HEK293 (cell line): ENCODE measurements at regions of chr22 and their contacts with region 1.

Region 1: GRCh38 chr22:39520054-39520891 is at the start of gene ATF4:
- H3K4me3 ChIP-seq: peak within 1 kb of the TSS; percentile 95
- H3K27ac ChIP-seq: peak within 1 kb of the TSS; percentile 95
- H3K4me1 ChIP-seq: 0 out of 2 replicates have a peak, but pooled peaks cover 5% of the 10 kb centered on the region
- CTCF ChIP-seq: 0 out of 2 replicates have a peak, but pooled peaks have one; percentile 11

Region 2: GRCh38 chr22:39395936-39396796 is 124.1 kb before region 1 on chr22:
- CTCF ChIA-PET with region 1: no interaction called
- POLR2A ChIA-PET with region 1: interaction called, 13 read pairs
- H3K4me3 ChIP-seq: no peak overlapping the region
- H3K27ac ChIP-seq: no peak overlapping the region
- H3K4me1 ChIP-seq: no peaks in the 10 kb centered on the region
- CTCF ChIP-seq: no peak

Region 3: GRCh38 chr22:39490135-39490798 is 30.0 kb before region 1 on chr22:
- CTCF ChIA-PET with region 1: interaction called, 380 read pairs
- POLR2A ChIA-PET with region 1: interaction called, 23 read pairs
- H3K4me3 ChIP-seq: no peak overlapping the region
- H3K27ac ChIP-seq: no peak overlapping the region
- H3K4me1 ChIP-seq: no peaks in the 10 kb centered on the region
- CTCF ChIP-seq: no peak

Region 4: GRCh38 chr22:39502109-39502788 is 18.0 kb before region 1 on chr22 and contains the start of gene MIEF1:
- CTCF ChIA-PET with region 1: interaction called, 380 read pairs
- POLR2A ChIA-PET with region 1: interaction called, 117 read pairs
- H3K4me3 ChIP-seq: peak within 1 kb of the TSS; percentile 92
- H3K27ac ChIP-seq: peak within 1 kb of the TSS; percentile 78
- H3K4me1 ChIP-seq: peaks cover 12% of the 10 kb centered on the region
- CTCF ChIP-seq: peak; percentile 12

Region 5: GRCh38 chr22:39532215-39533071 is 12.2 kb after region 1 on chr22 and contains the start of gene RPS19BP1:
- CTCF ChIA-PET with region 1: interaction called, 62 read pairs
- POLR2A ChIA-PET with region 1: interaction called, 113 read pairs
- H3K4me3 ChIP-seq: peak within 1 kb of the TSS; percentile 75
- H3K27ac ChIP-seq: peak within 1 kb of the TSS; percentile 79
- H3K4me1 ChIP-seq: peaks cover 14% of the 10 kb centered on the region
- CTCF ChIP-seq: peak; percentile 13; the same call in 1 of the 2 replicates

Region 6: GRCh38 chr22:39543095-39543494 is 22.8 kb after region 1 on chr22:
- CTCF ChIA-PET with region 1: no interaction called
- POLR2A ChIA-PET with region 1: no interaction called
- H3K4me3 ChIP-seq: no peak overlapping the region
- H3K27ac ChIP-seq: no peak overlapping the region
- H3K4me1 ChIP-seq: no peaks in the 10 kb centered on the region
- CTCF ChIP-seq: 0 out of 2 replicates have a peak, but pooled peaks have one; percentile 13